Ascending aorta (tissue), 2 donors: ENCODE measurements at regions of chr3 and their contacts with region 1.

Region 1: DNA sequence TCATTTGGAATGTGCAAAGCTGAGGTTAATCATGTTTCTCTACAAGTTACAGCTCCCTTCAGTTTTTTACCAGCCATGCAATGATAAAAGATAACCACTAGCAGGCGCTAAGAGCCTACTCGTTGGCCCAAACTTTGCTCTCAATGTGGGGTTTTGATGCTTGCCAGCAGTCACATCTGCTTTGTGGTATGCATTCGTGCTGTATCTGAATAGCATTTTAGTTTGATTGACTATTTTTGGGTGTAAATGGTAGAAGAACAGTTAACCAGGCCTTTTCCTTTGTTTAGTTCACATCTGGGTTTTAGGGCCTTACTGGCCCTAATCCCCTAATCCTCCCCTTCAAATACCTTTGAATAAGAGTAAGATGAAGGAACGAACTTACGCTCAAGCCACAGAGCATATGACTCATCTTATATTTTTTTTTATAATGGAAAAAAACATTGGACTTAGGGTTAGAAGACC is 4.4 kb upstream of the CLDN11 start:
- DNase-seq: no peak
- H3K4me3 ChIP-seq: no peak overlapping the region
- H3K27ac ChIP-seq: no peak overlapping the region
- H3K4me1 ChIP-seq: peaks cover 3 to 8% of the 10 kb centered on the region in 2 donors
- H3K27me3 ChIP-seq: no peaks in the 10 kb centered on the region
- CTCF ChIP-seq: peak; percentile 74 to 90 (median 87)

Region 2: DNA sequence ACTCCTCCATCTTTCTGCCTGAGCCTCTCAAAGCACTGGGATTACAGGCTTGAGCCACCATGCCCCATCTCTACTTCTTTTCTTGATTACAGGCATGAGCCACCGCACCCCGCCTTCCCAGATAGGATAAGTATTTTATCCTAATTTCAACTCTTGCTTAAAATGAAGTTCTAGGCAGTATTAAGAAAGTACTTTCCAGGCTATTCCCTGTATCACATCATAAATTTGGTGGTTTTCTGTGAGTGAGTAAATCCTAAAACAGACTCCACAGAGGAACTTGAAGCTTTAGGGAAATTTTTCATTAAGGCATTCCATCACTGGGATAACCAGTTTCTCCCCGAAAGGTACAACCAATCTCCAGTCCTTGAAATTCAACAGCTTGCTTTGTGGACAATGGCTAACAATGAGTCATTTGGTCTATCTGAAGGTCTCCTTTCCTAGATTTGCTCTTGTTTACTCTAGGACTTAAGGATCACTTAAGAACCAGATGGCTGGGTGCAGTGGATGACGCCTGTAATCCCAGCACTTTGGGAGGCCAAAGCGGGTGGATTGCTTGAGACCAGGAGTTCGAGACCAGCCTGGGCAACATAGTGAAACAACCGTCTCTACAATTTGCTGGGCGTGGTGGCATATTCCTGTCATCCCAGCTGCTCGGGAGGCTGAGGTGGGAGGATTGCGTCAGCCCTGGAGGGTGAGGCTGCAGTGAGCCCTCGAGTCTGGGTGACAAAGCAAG is 106.4 kb before region 1 on chr3:
- intact Hi-C with region 1: loop called (anchors 2 kb)
- DNase-seq: no peak
- H3K4me3 ChIP-seq: no peak overlapping the region
- H3K27ac ChIP-seq: no peak overlapping the region
- H3K4me1 ChIP-seq: no peaks in the 10 kb centered on the region
- H3K27me3 ChIP-seq: no peaks in the 10 kb centered on the region
- CTCF ChIP-seq: no peak

Region 3: DNA sequence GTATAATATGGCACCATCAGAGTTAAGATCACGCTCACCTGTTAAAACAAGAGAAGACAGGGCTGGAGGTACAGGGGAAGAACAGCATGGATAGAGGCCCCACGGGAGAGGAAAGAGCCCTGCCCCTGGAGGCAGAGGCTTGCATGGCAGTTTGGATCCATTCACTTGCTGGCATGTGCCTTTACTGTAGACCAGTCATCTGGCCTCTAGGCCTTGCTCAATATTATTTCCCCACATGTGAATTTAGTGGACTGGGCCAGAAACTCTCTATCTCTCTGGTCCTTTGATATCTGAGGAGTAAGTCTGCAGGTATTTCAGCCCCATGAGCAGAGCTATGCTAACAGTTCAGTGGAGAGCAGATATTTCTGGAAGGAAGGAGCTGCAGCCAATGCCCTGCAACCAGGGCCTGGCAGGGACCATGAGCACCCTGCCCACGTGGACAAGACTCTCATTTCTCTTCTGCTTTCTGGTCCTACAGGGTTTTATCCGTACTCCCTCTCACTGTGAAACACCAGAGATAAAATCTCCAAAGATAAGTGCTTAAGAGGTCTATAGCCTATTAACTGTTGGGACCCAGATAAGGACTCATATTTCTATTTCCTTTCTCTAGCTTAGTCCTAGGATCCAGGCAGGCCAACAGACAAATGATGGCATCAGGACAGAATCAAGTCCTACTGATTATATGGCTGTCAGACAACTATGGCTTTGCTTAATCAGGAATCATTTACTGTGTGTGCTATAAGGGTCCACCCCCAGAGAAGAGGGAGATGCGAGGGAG is 69.4 kb after region 1 on chr3:
- intact Hi-C with region 1: no loop called
- DNase-seq: no peak
- H3K4me3 ChIP-seq: no peak overlapping the region
- H3K27ac ChIP-seq: no peak overlapping the region
- H3K4me1 ChIP-seq: no peaks in the 10 kb centered on the region
- H3K27me3 ChIP-seq: no peaks in the 10 kb centered on the region
- CTCF ChIP-seq: no peak

Region 4: DNA sequence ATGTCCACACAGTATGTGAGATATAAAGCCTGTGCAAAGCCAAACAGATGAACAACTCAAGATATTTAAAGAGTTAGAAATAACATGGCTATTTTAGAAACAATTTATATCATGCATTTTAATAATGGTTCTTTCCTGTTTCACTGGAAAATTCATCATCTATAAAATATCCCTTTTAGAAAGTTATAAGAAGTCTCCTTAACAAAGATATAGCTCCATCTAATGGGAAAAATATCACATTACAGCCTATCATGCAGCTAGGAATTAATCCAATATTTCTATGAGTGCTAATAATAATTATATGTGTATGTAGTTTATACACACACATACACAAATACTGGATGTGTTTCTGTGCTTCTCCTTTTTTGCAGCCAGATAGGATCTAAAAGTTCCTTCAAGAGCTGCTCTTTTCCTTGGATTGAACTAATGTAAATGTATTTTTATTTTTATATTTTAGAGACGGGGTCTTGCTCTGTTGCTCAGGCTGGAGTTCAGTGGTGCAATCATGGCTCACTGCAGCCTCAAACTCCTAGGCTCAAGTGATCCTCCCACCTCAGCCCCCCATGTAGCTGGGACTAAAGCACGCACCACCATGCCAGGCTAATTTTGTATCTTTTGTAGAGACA is 434.2 kb after region 1 on chr3:
- intact Hi-C with region 1: loop called (anchors 1 kb)
- DNase-seq: no peak
- H3K4me3 ChIP-seq: no peak overlapping the region
- H3K27ac ChIP-seq: no peak overlapping the region
- H3K4me1 ChIP-seq: no peaks in the 10 kb centered on the region
- H3K27me3 ChIP-seq: no peaks in the 10 kb centered on the region
- CTCF ChIP-seq: peak in 2 of 3 experiments; percentile 11 to 51